Activated CD4-positive, alpha-beta T cell treated with anti-CD3 and anti-CD28 coated beads, Interleukin-2, amount 10 ng/mL, durations not matched to agents 7 days and 5 days (primary cell): ENCODE measurements at regions of chr6 and their contacts with region 1.

Region 1: GRCh38 chr6:149208134-149208601 is 109.3 kb upstream of the TAB2 start:
- DNase-seq: no peak
- H3K4me3 Mint-ChIP-seq: no peak overlapping the region
- H3K27ac Mint-ChIP-seq: no peak overlapping the region
- H3K4me1 Mint-ChIP-seq: peaks cover 20% of the 10 kb centered on the region
- H3K27me3 Mint-ChIP-seq: no peaks in the 10 kb centered on the region

Region 2: GRCh38 chr6:149194820-149195558 is 13.2 kb before region 1 on chr6:
- CTCF ChIA-PET with region 1: interaction called, 14 read pairs
- POLR2A ChIA-PET with region 1: no interaction called
- DNase-seq: no peak
- H3K4me3 Mint-ChIP-seq: no peak overlapping the region
- H3K27ac Mint-ChIP-seq: peak overlapping the region; percentile 1
- H3K4me1 Mint-ChIP-seq: peaks cover 22% of the 10 kb centered on the region
- H3K27me3 Mint-ChIP-seq: no peaks in the 10 kb centered on the region